ENCODE measurements at regions of chr1 and their contacts with region 1.

Region 1: GRCh38 chr1:244451951-244452795 is 464 bp upstream of the ADSS2 start:
- DNase-seq: peak; percentile 99
- H3K4me3 ChIP-seq: peak overlapping the region; percentile 82 to 88
- H3K27ac ChIP-seq: peak overlapping the region; percentile 94 to 97
- H3K4me1 ChIP-seq: no peaks in the 10 kb centered on the region
- H3K27me3 ChIP-seq: no peaks in the 10 kb centered on the region
- CTCF ChIP-seq: peak; percentile 34 to 81 (median 58)
- POLR2A ChIP-seq: no peak

Region 2: DNA sequence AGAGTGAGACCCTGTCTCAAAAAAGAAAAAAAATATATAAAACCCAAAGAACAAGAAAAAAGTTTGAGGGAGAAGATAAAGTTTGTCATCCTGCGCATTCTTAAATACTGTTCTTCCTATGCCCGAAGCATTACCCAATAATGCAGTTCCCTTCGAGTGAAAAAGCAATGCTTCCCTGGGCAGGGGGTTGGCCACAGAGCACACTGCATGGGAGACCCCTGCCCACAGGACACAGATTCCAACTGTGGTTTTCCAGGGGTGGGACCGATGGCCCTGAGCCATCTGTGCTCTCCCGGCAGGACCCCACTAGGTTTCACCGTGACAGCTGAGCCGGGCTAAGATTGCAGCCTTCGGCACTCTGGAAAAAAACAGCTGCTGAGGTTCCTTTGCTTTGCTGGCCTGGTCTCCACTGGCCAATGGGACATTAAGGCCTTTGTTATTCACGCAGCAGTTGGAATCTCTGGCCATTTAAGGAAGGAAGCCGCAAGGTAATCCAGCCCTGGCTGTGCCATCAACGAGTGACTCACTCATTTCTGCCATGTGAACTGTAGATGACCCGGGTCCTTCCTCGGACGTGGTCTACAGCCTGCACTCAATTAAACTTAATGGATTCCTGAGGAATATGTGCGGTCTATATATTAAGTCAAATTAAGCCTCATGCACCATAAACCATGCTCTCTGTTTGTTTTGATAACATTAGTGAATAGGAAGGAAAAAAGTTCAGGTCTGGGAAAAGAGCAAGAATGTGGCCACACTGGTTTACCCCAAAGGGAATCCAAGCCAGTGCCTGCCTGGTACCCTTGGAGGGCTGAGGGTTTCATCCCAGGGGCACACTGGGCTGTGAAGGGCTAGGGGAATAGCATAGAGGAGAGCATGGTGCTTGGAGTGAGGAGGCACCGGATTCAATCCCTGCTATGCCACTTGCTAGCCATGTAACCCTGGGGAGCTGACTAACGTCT is 237.9 kb before region 1 on chr1:
- intact Hi-C with region 1: loop called (anchors 10 kb)
- DNase-seq: peak; percentile 11
- H3K4me3 ChIP-seq: no peak overlapping the region
- H3K27ac ChIP-seq: peak overlapping the region in 1 of 2 donors; percentile 26
- H3K4me1 ChIP-seq: peaks cover 5% of the 10 kb centered on the region
- H3K27me3 ChIP-seq: no peaks in the 10 kb centered on the region
- CTCF ChIP-seq: no peak
- POLR2A ChIP-seq: no peak

Measured in prostate gland (tissue), 2 donors.